T-cell (primary cell): ENCODE measurements at regions of chr10 and their contacts with region 1.

Region 1: GRCh38 chr10:30404540-30404939 is 29.4 kb upstream of the MAP3K8 start:
- DNase-seq: no peak
- ATAC-seq: no peak
- H3K4me3 ChIP-seq: no peak overlapping the region
- H3K4me3 Mint-ChIP-seq: no peak overlapping the region
- H3K27ac ChIP-seq: no peak overlapping the region
- H3K27ac Mint-ChIP-seq: no peak overlapping the region
- H3K4me1 ChIP-seq: no peaks in the 10 kb centered on the region
- H3K4me1 Mint-ChIP-seq: peaks cover 0 to 2% (median 0%) of the 10 kb centered on the region in 3 donors
- H3K27me3 ChIP-seq: peaks cover 0 to 6% of the 10 kb centered on the region in 2 experiments
- H3K27me3 Mint-ChIP-seq: no peaks in the 10 kb centered on the region

Region 2: GRCh38 chr10:30519639-30520038 is 115.1 kb after region 1 on chr10:
- CTCF ChIA-PET with region 1: no interaction called
- POLR2A ChIA-PET with region 1: no interaction called
- DNase-seq: no peak
- ATAC-seq: no peak
- H3K4me3 ChIP-seq: no peak overlapping the region
- H3K4me3 Mint-ChIP-seq: no peak overlapping the region
- H3K27ac ChIP-seq: no peak overlapping the region
- H3K27ac Mint-ChIP-seq: no peak overlapping the region
- H3K4me1 ChIP-seq: peaks cover 0 to 13% of the 10 kb centered on the region in 2 experiments
- H3K4me1 Mint-ChIP-seq: peaks cover 3 to 19% (median 10%) of the 10 kb centered on the region in 3 donors
- H3K27me3 ChIP-seq: no peaks in the 10 kb centered on the region
- H3K27me3 Mint-ChIP-seq: no peaks in the 10 kb centered on the region

Region 3: GRCh38 chr10:30687698-30688219 is 283.2 kb after region 1 on chr10:
- CTCF ChIA-PET with region 1: interaction called in 1 of 2 experiments, 10 read pairs
- POLR2A ChIA-PET with region 1: no interaction called
- DNase-seq: peak; percentile 29 to 86 (median 67)
- ATAC-seq: peak; percentile 63 to 80 (median 75)
- H3K4me3 ChIP-seq: no peak overlapping the region
- H3K4me3 Mint-ChIP-seq: no peak overlapping the region
- H3K27ac ChIP-seq: no peak overlapping the region
- H3K27ac Mint-ChIP-seq: no peak overlapping the region
- H3K4me1 ChIP-seq: peaks cover 0 to 3% of the 10 kb centered on the region in 2 experiments
- H3K4me1 Mint-ChIP-seq: peaks cover 0 to 15% (median 9%) of the 10 kb centered on the region in 3 donors
- H3K27me3 ChIP-seq: peaks cover 0 to 16% of the 10 kb centered on the region in 2 experiments
- H3K27me3 Mint-ChIP-seq: peaks cover 12 to 33% of the 10 kb centered on the region in 2 donors